ENCODE measurements at regions of chr14 and their contacts with region 1.

Region 1: DNA sequence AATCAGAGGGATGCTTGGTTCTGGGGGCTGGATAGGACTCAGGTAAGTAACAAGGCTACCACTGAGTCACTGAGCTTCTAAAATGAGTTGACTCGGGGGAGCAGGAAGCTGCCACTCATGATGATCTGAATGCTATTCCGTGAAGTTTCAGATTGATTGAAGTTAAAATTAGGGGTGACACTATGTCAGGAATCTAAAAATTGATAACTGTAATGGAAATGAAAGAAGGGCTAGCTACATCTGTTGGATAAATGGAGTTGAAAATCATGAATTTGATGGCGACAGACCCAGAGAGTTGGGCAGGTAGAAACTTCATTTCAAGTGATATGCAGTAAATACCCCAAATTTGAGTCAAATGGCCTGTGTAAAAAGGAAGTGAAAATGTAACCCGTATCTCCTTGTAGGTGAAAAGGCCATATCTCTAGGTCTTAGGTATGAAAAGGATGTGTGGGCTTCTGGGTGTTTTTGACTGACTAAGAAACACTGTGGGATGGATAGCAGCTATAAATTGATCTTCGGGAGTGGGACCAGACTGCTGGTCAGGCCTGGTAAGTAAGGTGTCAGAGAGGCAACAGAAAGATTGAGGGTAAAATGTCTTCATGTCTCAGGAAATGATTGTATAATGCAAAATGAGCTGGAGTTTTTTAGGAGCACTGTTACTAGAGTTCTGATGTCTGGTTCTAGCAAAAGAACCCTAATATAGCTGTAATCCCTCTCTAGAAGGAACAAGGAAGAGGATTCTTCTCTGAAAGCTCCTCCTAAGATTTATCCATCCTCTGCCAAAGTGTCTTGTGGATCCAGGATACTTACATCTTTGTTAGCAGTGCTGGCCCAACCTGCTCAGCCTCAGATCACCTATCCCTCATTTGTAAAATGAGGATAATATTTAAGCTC is 57.3 kb downstream of the DAD1 start:
- DNase-seq: peak; percentile 93
- ATAC-seq: peak; percentile 70
- H3K4me3 ChIP-seq: peak overlapping the region; percentile 67
- H3K27ac ChIP-seq: peak overlapping the region; percentile 97
- H3K4me1 ChIP-seq: peaks cover 72% of the 10 kb centered on the region
- H3K27me3 ChIP-seq: no peaks in the 10 kb centered on the region
- CTCF ChIP-seq: no peak
- EP300 ChIP-seq: peak in 1 of 2 experiments; percentile 93; a peak in 2 of 4 replicates
- POLR2A ChIP-seq: peak; percentile 67
- RAD21 ChIP-seq: 0 out of 2 replicates have a peak, but pooled peaks have one; percentile 5

Region 2: GRCh38 chr14:22478670-22479069 is 53.0 kb before region 1 on chr14:
- CTCF ChIA-PET with region 1: interaction called, 25 read pairs
- POLR2A ChIA-PET with region 1: interaction called, 46 read pairs
- RAD21 ChIA-PET with region 1: interaction called, 95 read pairs
- SMC1A ChIA-PET with region 1: interaction called, 65 read pairs
- in situ Hi-C with region 1: no loop called
- intact Hi-C with region 1: no loop called
- DNase-seq: no peak
- ATAC-seq: peak; percentile 5; the same call in 1 of the 3 replicates
- H3K4me3 ChIP-seq: peak overlapping the region; percentile 66; the same call in 1 of the 2 replicates
- H3K27ac ChIP-seq: peak overlapping the region; percentile 98
- H3K4me1 ChIP-seq: peaks cover 71% of the 10 kb centered on the region
- H3K27me3 ChIP-seq: no peaks in the 10 kb centered on the region
- CTCF ChIP-seq: no peak
- EP300 ChIP-seq: 0 out of 4 replicates have a peak, but pooled peaks of 1 of the 2 experiments have one; percentile 1
- POLR2A ChIP-seq: no peak
- RAD21 ChIP-seq: no peak

Region 3: GRCh38 chr14:22491683-22492621 is 39.7 kb before region 1 on chr14:
- CTCF ChIA-PET with region 1: interaction called, 12 read pairs
- POLR2A ChIA-PET with region 1: interaction called, 96 read pairs
- RAD21 ChIA-PET with region 1: interaction called, 55 read pairs
- SMC1A ChIA-PET with region 1: interaction called, 139 read pairs
- in situ Hi-C with region 1: no loop called
- intact Hi-C with region 1: loop called (anchors 2 kb)
- DNase-seq: no peak
- ATAC-seq: peak; percentile 57
- H3K4me3 ChIP-seq: peak overlapping the region; percentile 45
- H3K27ac ChIP-seq: peak overlapping the region; percentile 98
- H3K4me1 ChIP-seq: peaks cover 86% of the 10 kb centered on the region
- H3K27me3 ChIP-seq: no peaks in the 10 kb centered on the region
- CTCF ChIP-seq: no peak
- EP300 ChIP-seq: peak; percentile 69 to 92; a peak in 3 of 4 replicates
- POLR2A ChIP-seq: peak; percentile 68
- RAD21 ChIP-seq: peak; percentile 26; the same call in 1 of the 2 replicates

Region 4: DNA sequence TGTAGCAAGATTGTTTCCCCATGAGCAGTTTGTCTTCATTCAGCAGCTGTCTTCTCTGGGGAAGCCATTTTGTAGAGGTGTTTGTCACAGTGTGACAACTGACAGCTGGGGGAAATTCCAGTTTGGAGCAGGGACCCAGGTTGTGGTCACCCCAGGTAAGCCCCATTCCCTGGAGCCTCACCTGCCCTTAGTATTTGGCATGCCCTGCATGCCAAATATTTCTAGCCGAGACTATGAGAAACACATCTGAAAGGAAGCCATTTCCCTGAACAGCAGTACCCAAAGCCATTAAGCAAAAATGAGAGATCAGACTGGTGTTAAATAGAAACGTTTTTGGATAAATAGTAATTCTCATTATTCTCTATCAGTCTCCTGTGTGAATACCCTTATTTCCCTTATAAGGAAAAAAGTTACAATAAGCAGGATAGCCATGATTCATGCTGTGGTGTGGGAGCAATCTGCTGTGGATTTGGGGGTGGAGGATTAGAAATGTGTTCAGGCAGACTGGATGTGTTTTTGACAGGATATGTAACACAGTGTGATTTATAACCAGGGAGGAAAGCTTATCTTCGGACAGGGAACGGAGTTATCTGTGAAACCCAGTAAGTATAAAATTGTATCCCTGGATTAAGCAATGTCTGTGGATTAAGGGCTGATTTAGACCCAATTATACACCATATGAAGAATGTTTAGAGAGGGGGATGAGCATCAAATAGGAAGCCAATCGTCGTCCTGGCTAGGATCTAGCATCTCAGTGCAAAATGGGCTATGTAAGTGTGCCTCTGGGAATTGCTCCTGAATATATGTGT is 11.6 kb before region 1 on chr14:
- CTCF ChIA-PET with region 1: interaction called, 100 read pairs
- POLR2A ChIA-PET with region 1: interaction called, 339 read pairs
- RAD21 ChIA-PET with region 1: interaction called, 71 read pairs
- SMC1A ChIA-PET with region 1: interaction called, 399 read pairs
- in situ Hi-C with region 1: no loop called
- intact Hi-C with region 1: loop called (anchors 1 kb)
- DNase-seq: no peak
- ATAC-seq: no peak
- H3K4me3 ChIP-seq: peak overlapping the region; percentile 15; the same call in 1 of the 2 replicates
- H3K27ac ChIP-seq: peak overlapping the region; percentile 80
- H3K4me1 ChIP-seq: peaks cover 99% of the 10 kb centered on the region
- H3K27me3 ChIP-seq: no peaks in the 10 kb centered on the region
- CTCF ChIP-seq: no peak
- EP300 ChIP-seq: no peak
- POLR2A ChIP-seq: no peak
- RAD21 ChIP-seq: no peak

Measured in GM12878 (cell line).